ENCODE measurements at regions of chr2 and their contacts with region 1.

Region 1: GRCh38 chr2:127324635-127325034 is 30.7 kb upstream of the ERCC3 start:
- DNase-seq: peak in 5 of 7 donors; percentile 20 to 57 (median 39)
- H3K4me3 ChIP-seq: no peak overlapping the region
- H3K27ac ChIP-seq: no peak overlapping the region
- H3K4me1 ChIP-seq: no peaks in the 10 kb centered on the region
- H3K27me3 ChIP-seq: no peaks in the 10 kb centered on the region
- CTCF ChIP-seq: peak in 5 of 6 experiments; percentile 61 to 73 (median 70)
- POLR2A ChIP-seq: no peak

Region 2: DNA sequence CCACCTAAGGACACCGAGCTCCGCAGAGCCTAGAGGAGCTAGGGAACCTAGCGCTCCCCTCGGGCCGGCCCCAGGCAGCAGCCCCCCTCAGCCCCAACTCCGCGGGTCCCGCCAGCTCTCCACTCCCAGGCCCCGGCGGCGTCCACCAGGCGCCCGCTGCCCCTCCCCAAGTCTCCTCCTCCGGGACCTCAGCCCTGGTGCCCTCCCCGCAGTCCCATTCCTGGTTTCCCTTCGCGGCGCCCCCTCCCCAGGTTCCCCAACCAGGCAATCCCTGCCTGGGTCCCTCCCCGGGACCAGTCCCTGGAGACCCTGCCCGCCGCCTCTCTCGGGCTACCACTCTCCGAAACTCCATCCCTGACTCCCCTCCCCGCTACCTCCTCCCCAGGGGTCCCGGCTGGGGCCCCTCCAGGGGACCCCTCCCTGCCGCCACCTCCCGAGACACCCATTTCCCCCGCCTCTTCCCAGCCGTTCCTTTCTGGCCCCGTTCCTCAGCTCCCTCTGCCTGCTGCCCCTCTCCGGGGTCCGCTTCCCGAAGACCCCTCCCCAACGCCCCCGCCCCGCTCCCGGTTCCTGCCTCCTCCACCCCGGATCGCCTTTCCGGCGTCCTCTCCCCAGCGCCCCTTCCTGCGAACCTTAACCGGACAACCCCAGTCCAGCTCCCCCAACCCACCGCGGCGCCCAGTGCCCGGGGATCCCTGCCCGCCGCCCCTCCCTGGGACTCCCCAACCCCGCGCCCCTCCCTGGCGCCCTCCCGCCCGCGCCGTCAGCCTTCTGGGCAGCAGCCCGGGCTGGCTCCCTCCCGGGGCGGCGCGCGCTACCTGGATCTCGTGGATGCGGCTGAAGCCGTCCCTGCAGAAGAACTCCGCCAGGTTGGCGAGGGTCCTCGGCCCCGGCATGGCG is 105.2 kb before region 1 on chr2:
- intact Hi-C with region 1: no loop called
- DNase-seq: no peak
- H3K4me3 ChIP-seq: peak overlapping the region in 2 of 4 donors; percentile 21 to 52
- H3K27ac ChIP-seq: no peak overlapping the region
- H3K4me1 ChIP-seq: peaks cover 12 to 13% of the 10 kb centered on the region in 2 donors
- H3K27me3 ChIP-seq: peaks cover 39% of the 10 kb centered on the region
- CTCF ChIP-seq: no peak
- POLR2A ChIP-seq: no peak

Region 3: DNA sequence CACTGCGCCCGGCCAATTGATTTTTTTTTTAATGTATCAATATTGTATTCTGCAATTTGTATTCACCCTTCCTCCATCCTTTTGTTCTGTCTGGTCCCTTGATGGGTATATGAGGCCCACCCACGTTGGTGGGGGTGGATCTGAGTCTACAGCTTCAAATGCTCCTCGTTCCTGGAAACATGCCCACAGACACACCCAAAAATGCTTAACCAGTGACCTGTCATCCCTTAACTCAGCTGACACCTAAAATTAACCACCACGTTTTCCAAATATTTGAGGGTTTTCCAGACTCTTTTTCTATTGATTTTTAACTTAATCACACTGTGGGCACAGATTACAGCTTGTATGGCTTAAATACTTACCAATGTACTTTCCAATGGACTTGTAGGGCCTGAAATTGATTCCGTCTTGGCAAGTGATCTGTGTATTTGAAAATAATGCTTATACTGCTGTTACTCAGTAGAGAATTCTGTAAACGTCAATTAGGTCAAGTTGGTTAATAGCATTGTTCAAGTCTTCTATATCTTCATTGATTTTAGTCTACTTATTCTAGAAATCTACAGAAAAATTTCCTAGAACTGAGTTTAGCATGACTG is 70.2 kb before region 1 on chr2:
- intact Hi-C with region 1: no loop called
- DNase-seq: no peak
- H3K4me3 ChIP-seq: no peak overlapping the region
- H3K27ac ChIP-seq: no peak overlapping the region
- H3K4me1 ChIP-seq: no peaks in the 10 kb centered on the region
- H3K27me3 ChIP-seq: no peaks in the 10 kb centered on the region
- CTCF ChIP-seq: no peak
- POLR2A ChIP-seq: no peak

Region 4: DNA sequence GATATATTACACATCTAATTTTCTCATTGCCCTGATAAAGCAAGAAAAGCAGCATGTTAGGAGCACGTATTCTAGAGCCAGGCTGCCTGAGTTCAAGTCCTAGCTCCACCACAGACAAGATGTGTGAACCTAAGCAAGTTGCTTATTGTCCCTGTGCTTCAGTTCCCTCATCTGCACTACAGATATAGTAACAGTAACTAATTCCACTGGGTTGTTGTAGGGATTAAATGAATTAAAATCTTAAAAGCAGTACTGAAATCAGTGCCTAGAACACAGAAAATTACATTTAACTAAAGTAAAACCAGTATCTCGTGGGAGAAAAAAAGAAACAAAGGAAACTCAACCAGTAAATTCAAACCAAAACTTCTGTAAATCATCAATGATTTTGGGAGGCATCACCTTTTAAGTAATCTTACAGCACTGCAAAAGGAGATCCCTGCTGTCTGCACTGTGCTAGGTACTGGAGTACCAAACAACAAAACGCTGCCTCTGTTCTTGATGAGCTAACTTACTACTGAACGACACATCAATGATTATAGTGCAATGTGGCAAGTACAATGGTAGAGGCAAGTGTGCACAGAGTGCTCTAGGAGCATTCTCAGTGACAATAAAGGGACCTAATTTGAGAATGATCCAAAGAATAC is 55.2 kb after region 1 on chr2:
- intact Hi-C with region 1: no loop called
- DNase-seq: no peak
- H3K4me3 ChIP-seq: no peak overlapping the region
- H3K27ac ChIP-seq: no peak overlapping the region
- H3K4me1 ChIP-seq: peaks cover 0 to 23% of the 10 kb centered on the region in 2 donors
- H3K27me3 ChIP-seq: no peaks in the 10 kb centered on the region
- CTCF ChIP-seq: no peak
- POLR2A ChIP-seq: no peak

Region 5: GRCh38 chr2:127415593-127416505 is 91.2 kb after region 1 on chr2:
- intact Hi-C with region 1: loop called (anchors 5 kb)
- DNase-seq: peak; percentile 62 to 82 (median 80)
- H3K4me3 ChIP-seq: peak overlapping the region in 2 of 4 donors; percentile 11 to 49
- H3K27ac ChIP-seq: no peak overlapping the region
- H3K4me1 ChIP-seq: peaks cover 0 to 26% of the 10 kb centered on the region in 2 donors
- H3K27me3 ChIP-seq: no peaks in the 10 kb centered on the region
- CTCF ChIP-seq: peak; percentile 51 to 81 (median 70)
- POLR2A ChIP-seq: no peak

Region 6: GRCh38 chr2:127479219-127479825 is 154.7 kb after region 1 on chr2:
- intact Hi-C with region 1: loop called in 1 of 2 experiments (anchors 5 kb)
- DNase-seq: no peak
- H3K4me3 ChIP-seq: no peak overlapping the region
- H3K27ac ChIP-seq: no peak overlapping the region
- H3K4me1 ChIP-seq: no peaks in the 10 kb centered on the region
- H3K27me3 ChIP-seq: no peaks in the 10 kb centered on the region
- CTCF ChIP-seq: peak; percentile 29 to 74 (median 70)
- POLR2A ChIP-seq: no peak

Measured in adrenal gland (tissue), 19 donors.